ENCODE measurements at regions of chr13 and their contacts with region 1.

Region 1: GRCh38 chr13:95676762-95677563 is at the start of gene DNAJC3:
- DNase-seq: peak; percentile 95 to 99
- H3K4me3 ChIP-seq: peak within 1 kb of the TSS; percentile 72 to 81
- H3K27ac ChIP-seq: peak within 1 kb of the TSS; percentile 98 to 99
- H3K4me1 ChIP-seq: peaks cover 0 to 20% of the 10 kb centered on the region in 2 donors
- H3K27me3 ChIP-seq: no peaks in the 10 kb centered on the region
- CTCF ChIP-seq: no peak
- total RNA-seq, gene DNAJC3: 44.3 TPM

Region 2: DNA sequence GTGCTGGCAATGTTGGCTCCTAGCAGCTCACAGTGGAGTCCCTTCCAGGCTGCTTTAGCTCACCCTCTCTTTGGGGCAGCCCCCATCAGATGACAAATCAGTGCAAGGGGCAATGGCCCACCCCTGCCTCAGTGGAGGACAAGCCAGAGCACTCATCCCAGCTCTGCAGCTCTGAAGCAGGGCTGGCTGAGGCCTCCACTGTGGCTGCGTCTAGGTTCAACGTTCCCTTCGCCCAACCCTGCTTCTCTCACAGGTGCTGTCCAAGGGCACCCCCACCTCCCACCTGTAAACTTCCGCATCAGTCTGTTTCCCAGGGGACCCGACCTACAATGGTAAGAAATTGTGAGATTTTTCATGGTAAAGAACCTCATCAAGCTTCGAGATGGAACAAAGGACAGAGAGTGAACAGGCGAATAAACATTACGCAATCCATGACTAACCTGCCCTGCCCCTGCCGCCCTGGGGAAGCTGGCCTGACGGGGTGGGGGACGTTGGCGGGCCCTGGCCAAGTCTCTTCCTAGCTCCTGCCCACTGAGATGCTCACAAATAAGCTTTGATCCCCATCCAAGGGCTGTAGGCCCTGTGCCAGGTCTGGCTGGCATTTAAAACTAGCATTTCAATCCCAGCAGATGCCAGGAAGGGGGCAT is 73.0 kb before region 1 on chr13:
- intact Hi-C with region 1: no loop called
- DNase-seq: no peak
- H3K4me3 ChIP-seq: no peak overlapping the region
- H3K27ac ChIP-seq: no peak overlapping the region
- H3K4me1 ChIP-seq: no peaks in the 10 kb centered on the region
- H3K27me3 ChIP-seq: no peaks in the 10 kb centered on the region
- CTCF ChIP-seq: no peak

Region 3: GRCh38 chr13:95644601-95645052 is 32.3 kb before region 1 on chr13 and contains the start of gene DZIP1:
- intact Hi-C with region 1: loop called (anchors 1 kb)
- DNase-seq: peak in 1 of 2 donors; percentile 85
- H3K4me3 ChIP-seq: peak within 1 kb of the TSS; percentile 66 to 77
- H3K27ac ChIP-seq: peak within 1 kb of the TSS; percentile 70 to 72
- H3K4me1 ChIP-seq: peaks cover 4 to 7% of the 10 kb centered on the region in 2 donors
- H3K27me3 ChIP-seq: no peaks in the 10 kb centered on the region
- CTCF ChIP-seq: no peak
- total RNA-seq, gene DZIP1: 12.7 TPM

Region 4: DNA sequence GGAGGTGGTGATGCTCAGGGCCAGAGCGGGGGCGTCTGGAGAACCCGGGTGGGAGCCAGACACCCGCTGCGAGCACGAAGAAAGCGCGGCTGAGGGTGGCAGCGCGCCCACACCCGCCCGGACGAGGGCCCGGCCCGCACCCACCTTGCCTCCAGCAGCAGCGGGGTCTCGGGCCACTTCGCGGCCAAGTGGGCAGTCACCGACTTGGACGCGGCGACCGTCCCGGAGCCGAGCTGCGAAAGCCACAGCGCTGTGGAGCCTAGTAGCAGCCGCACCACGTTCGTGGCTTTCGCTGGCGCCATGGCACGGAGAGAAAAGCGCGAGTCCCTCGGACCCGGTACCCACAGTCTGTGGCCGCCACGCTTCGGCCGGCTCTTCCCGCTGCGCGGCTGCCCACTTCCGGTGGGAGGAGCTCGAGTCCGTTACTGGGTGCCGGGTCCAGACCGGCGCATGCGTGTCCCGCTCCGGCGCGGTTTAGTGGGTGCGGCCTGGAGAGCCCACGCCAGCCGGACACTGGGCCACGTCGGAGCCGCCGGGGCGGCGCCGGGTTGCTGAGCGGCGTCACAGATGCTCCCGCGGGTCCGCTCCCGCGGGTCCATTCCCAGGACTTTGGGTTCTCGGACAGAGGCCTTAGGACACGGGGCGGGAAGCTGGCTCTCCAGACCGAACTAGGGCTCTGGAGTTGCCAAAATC is 376.2 kb after region 1 on chr13 and contains the start of gene UGGT2:
- intact Hi-C with region 1: loop called (anchors 5 kb)
- DNase-seq: peak; percentile 77 to 96
- H3K4me3 ChIP-seq: peak within 1 kb of the TSS; percentile 73 to 89
- H3K27ac ChIP-seq: peak within 1 kb of the TSS; percentile 81 to 94
- H3K4me1 ChIP-seq: no peaks in the 10 kb centered on the region
- H3K27me3 ChIP-seq: no peaks in the 10 kb centered on the region
- CTCF ChIP-seq: no peak
- total RNA-seq, gene UGGT2: 26.0 TPM

Measured in ascending aorta (tissue), 2 donors.